ENCODE measurements at regions of chr4 and their contacts with region 1.

Region 1: DNA sequence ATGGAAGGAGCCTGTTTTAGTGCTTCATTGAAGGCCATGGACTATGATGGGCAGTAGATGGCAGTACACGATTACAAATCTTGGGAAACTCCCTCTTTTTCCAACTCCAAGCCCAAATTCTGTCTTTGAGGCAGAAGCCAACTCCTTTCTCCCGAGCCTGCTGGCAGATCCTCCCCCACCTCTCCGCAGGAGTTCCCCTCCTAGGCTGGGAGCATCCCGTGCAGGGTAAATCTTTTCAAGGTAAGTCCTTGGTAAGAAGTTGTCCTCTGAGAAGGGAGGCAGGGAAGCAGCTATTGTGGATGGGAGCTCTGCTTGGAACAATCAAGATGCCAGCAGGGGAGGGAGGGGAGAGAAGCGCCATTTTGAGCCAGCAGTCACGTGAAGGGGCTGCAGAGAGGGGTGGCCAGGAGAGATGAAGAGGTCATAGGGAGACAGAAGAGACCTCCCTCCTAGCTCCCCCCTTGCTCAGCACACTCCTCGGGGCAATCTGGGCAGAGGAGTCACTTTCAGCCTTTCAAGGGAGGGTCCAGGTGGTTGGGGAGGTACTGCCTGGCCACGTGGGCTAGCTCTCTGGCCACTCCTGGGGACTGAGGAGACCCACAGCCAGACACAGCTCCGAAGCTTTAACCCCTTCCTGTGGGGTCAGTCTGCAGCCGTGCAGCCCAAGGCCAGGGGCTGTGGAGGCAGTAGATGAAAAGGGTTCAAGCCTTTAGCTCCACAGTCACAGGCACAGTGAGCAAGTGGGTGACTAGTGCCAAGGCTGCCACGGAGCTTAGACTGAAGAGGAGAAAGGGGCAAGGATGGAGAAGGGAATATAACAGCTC is 9.6 kb downstream of the CC2D2A start:
- DNase-seq: peak; percentile 89
- H3K4me3 ChIP-seq: peak overlapping the region; percentile 24 to 81 (median 44)
- H3K27ac ChIP-seq: peak overlapping the region; percentile 66
- H3K4me1 ChIP-seq: peaks cover 10% of the 10 kb centered on the region
- H3K27me3 ChIP-seq: no peaks in the 10 kb centered on the region
- CTCF ChIP-seq: peak; percentile 71 to 73
- POLR2A ChIP-seq: no peak

Region 2: GRCh38 chr4:15344041-15344440 is 135.3 kb before region 1 on chr4:
- CTCF ChIA-PET with region 1: no interaction called
- POLR2A ChIA-PET with region 1: no interaction called
- dilution Hi-C with region 1: no loop called
- intact Hi-C with region 1: no loop called
- DNase-seq: no peak
- H3K4me3 ChIP-seq: no peak overlapping the region
- H3K27ac ChIP-seq: no peak overlapping the region
- H3K4me1 ChIP-seq: no peaks in the 10 kb centered on the region
- H3K27me3 ChIP-seq: no peaks in the 10 kb centered on the region
- CTCF ChIP-seq: no peak
- POLR2A ChIP-seq: no peak

Region 3: GRCh38 chr4:15457406-15458201 is 21.7 kb before region 1 on chr4:
- CTCF ChIA-PET with region 1: interaction called, 12 read pairs
- POLR2A ChIA-PET with region 1: no interaction called
- dilution Hi-C with region 1: no loop called
- intact Hi-C with region 1: no loop called
- DNase-seq: peak; percentile 49
- H3K4me3 ChIP-seq: no peak overlapping the region
- H3K27ac ChIP-seq: no peak overlapping the region
- H3K4me1 ChIP-seq: no peaks in the 10 kb centered on the region
- H3K27me3 ChIP-seq: peaks cover 3 to 18% of the 10 kb centered on the region in 2 experiments
- CTCF ChIP-seq: peak; percentile 50 to 54
- POLR2A ChIP-seq: no peak

Region 4: GRCh38 chr4:15655229-15656037 is 176.1 kb after region 1 on chr4 and contains the start of gene FBXL5:
- CTCF ChIA-PET with region 1: interaction called, 13 read pairs
- POLR2A ChIA-PET with region 1: no interaction called
- dilution Hi-C with region 1: no loop called
- intact Hi-C with region 1: loop called (anchors 1 kb)
- DNase-seq: peak; percentile 86
- H3K4me3 ChIP-seq: peak within 1 kb of the TSS; percentile 78 to 97 (median 91)
- H3K27ac ChIP-seq: peak within 1 kb of the TSS; percentile 98
- H3K4me1 ChIP-seq: peaks cover 29% of the 10 kb centered on the region
- H3K27me3 ChIP-seq: no peaks in the 10 kb centered on the region
- CTCF ChIP-seq: no peak
- POLR2A ChIP-seq: peak; percentile 92
- total RNA-seq, gene FBXL5: 60.2 and 64.8 TPM in 2 replicates

Region 5: DNA sequence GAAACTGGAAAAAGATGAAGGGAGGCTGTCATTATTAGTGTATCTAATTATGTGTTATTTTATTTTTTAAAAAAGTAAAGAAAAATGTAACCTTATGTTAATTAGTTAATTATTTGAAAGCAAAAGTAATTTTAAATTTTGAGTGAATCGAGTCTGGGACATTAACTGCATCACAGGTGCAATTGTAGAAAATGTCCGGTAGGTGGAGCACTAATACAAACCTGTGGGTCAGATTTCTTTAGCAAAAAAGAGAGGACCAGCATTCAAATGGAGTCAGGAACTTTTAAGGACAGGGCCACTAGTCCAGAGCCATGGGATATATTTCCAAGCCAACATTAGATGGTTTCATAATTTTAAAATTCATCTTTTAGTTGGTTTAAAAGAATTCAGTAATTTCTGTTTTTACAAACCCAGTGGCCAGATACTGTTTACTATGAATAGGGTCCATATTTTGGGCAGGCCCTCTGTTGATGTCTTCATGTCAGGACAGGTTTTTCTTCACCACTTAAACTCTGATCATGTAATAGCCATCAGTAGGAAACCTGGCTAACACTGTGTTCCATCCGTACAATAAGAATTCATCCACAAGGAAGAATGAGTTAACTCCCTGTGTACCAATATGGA is 250.7 kb after region 1 on chr4:
- CTCF ChIA-PET with region 1: interaction called, 8 read pairs
- POLR2A ChIA-PET with region 1: no interaction called
- dilution Hi-C with region 1: no loop called
- intact Hi-C with region 1: loop called (anchors 1 kb)
- DNase-seq: peak; percentile 41
- H3K4me3 ChIP-seq: no peak overlapping the region
- H3K27ac ChIP-seq: no peak overlapping the region
- H3K4me1 ChIP-seq: no peaks in the 10 kb centered on the region
- H3K27me3 ChIP-seq: no peaks in the 10 kb centered on the region
- CTCF ChIP-seq: peak; percentile 61 to 65
- POLR2A ChIP-seq: no peak

Region 6: DNA sequence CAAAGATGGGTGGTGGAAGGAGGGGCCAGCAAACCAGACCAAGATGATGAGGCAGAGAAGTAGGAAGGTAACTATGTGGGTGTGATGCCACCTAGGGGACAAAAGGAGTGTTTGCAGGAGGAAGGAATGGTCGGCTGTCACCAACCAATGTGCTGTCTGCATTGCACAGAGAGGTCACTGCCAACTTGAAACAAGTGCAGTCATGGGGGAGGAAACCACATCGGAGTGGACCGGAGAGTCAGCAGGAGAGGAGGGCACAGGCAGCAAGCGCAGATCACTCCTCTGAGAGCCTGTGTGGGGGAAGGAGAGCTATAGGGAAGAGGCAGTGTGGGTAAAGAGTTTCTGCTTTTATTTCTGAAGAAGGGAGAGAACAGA is 522.2 kb after region 1 on chr4:
- CTCF ChIA-PET with region 1: interaction called, 23 read pairs
- POLR2A ChIA-PET with region 1: no interaction called
- dilution Hi-C with region 1: no loop called
- intact Hi-C with region 1: loop called (anchors 1 kb)
- DNase-seq: peak; percentile 73
- H3K4me3 ChIP-seq: no peak overlapping the region
- H3K27ac ChIP-seq: no peak overlapping the region
- H3K4me1 ChIP-seq: no peaks in the 10 kb centered on the region
- H3K27me3 ChIP-seq: peaks cover 6% of the 10 kb centered on the region in 2 experiments
- CTCF ChIP-seq: peak; percentile 78 to 85
- POLR2A ChIP-seq: no peak